ENCODE measurements at regions of chr5 and their contacts with region 1.

Region 1: GRCh38 chr5:91383027-91383955 is at the start of gene ARRDC3:
- DNase-seq: peak; percentile 88
- ATAC-seq: peak; percentile 66
- H3K4me3 ChIP-seq: peak within 1 kb of the TSS; percentile 77 to 78
- H3K27ac ChIP-seq: peak within 1 kb of the TSS; percentile 93
- H3K4me1 ChIP-seq: peaks cover 14 to 25% of the 10 kb centered on the region in 2 experiments
- H3K27me3 ChIP-seq: no peaks in the 10 kb centered on the region
- CTCF ChIP-seq: no peak
- POLR2A ChIP-seq: peak; percentile 99
- RAD21 ChIP-seq: peak; percentile 22
- total RNA-seq, gene ARRDC3: 41.5 TPM

Region 2: GRCh38 chr5:90866333-90866732 is 517.0 kb before region 1 on chr5:
- CTCF ChIA-PET with region 1: interaction called, 21 read pairs
- POLR2A ChIA-PET with region 1: interaction called, 6 read pairs
- RAD21 ChIA-PET with region 1: interaction called, 3 to 4 read pairs
- intact Hi-C with region 1: loop called (anchors 10 kb)
- DNase-seq: peak; percentile 27
- ATAC-seq: peak; percentile 80
- H3K4me3 ChIP-seq: no peak overlapping the region
- H3K27ac ChIP-seq: no peak overlapping the region
- H3K4me1 ChIP-seq: no peaks in the 10 kb centered on the region
- H3K27me3 ChIP-seq: no peaks in the 10 kb centered on the region
- CTCF ChIP-seq: peak; percentile 29 to 66 (median 65); a peak in 4 of 6 replicates
- POLR2A ChIP-seq: no peak
- RAD21 ChIP-seq: peak; percentile 83

Region 3: GRCh38 chr5:91090995-91091394 is 292.3 kb before region 1 on chr5:
- CTCF ChIA-PET with region 1: no interaction called
- POLR2A ChIA-PET with region 1: no interaction called
- RAD21 ChIA-PET with region 1: no interaction called
- intact Hi-C with region 1: no loop called
- DNase-seq: no peak
- ATAC-seq: no peak
- H3K4me3 ChIP-seq: no peak overlapping the region
- H3K27ac ChIP-seq: no peak overlapping the region
- H3K4me1 ChIP-seq: no peaks in the 10 kb centered on the region
- H3K27me3 ChIP-seq: no peaks in the 10 kb centered on the region
- CTCF ChIP-seq: no peak
- POLR2A ChIP-seq: no peak
- RAD21 ChIP-seq: no peak

Region 4: DNA sequence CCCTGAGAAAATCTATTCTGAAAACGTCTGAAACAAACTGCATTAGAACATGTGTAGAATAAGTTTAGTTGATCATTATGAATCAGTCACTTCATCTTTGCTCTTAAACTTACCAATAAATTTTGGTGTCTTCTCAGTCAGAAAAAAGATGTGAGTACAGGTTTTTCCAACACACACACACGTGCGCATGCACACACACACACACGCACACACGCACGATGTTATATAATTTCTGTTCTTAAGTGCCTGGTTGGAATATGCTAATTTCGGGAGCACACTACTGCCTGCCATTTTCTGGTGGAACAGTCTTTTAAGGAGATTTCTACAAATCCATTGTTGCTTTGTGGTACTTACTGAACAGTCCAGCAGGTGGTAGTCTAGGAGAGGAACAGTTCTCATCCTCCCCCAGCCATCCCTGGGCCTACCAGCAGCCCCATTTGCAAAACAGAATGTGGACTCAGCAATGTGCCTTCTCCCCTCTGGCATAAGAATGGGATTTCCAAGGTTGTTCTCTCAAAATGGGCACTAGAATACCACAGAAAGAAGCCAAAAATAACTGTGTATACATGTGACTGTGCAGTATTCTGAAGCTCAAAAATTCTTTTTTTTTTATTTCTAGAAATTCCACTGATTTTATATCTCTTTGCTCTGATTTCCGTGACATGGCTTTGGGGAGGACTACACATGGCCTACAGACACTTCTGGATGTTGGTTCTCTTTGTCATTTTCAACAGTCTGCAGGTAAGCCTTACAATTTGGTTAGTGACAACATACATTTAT is 281.5 kb before region 1 on chr5:
- CTCF ChIA-PET with region 1: interaction called, 6 read pairs
- POLR2A ChIA-PET with region 1: interaction called, 3 read pairs
- RAD21 ChIA-PET with region 1: no interaction called
- intact Hi-C with region 1: loop called (anchors 1 kb)
- DNase-seq: peak; percentile 76
- ATAC-seq: peak; percentile 100
- H3K4me3 ChIP-seq: no peak overlapping the region
- H3K27ac ChIP-seq: no peak overlapping the region
- H3K4me1 ChIP-seq: peaks cover 0 to 4% of the 10 kb centered on the region in 2 experiments; a peak in 1 of 4 replicates
- H3K27me3 ChIP-seq: no peaks in the 10 kb centered on the region
- CTCF ChIP-seq: peak; percentile 71 to 95 (median 84)
- POLR2A ChIP-seq: no peak
- RAD21 ChIP-seq: peak; percentile 97

Region 5: GRCh38 chr5:91225848-91226686 is 157.2 kb before region 1 on chr5:
- CTCF ChIA-PET with region 1: interaction called, 111 read pairs
- POLR2A ChIA-PET with region 1: interaction called, 16 read pairs
- RAD21 ChIA-PET with region 1: interaction called, 9 to 15 read pairs
- intact Hi-C with region 1: loop called (anchors 1 kb)
- DNase-seq: peak; percentile 59
- ATAC-seq: peak; percentile 96
- H3K4me3 ChIP-seq: no peak overlapping the region
- H3K27ac ChIP-seq: no peak overlapping the region
- H3K4me1 ChIP-seq: 0 out of 4 replicates have a peak, but pooled peaks cover 0 to 5% of the 10 kb centered on the region in 2 experiments
- H3K27me3 ChIP-seq: no peaks in the 10 kb centered on the region
- CTCF ChIP-seq: peak; percentile 58 to 98 (median 74)
- POLR2A ChIP-seq: no peak
- RAD21 ChIP-seq: peak; percentile 98

Region 6: DNA sequence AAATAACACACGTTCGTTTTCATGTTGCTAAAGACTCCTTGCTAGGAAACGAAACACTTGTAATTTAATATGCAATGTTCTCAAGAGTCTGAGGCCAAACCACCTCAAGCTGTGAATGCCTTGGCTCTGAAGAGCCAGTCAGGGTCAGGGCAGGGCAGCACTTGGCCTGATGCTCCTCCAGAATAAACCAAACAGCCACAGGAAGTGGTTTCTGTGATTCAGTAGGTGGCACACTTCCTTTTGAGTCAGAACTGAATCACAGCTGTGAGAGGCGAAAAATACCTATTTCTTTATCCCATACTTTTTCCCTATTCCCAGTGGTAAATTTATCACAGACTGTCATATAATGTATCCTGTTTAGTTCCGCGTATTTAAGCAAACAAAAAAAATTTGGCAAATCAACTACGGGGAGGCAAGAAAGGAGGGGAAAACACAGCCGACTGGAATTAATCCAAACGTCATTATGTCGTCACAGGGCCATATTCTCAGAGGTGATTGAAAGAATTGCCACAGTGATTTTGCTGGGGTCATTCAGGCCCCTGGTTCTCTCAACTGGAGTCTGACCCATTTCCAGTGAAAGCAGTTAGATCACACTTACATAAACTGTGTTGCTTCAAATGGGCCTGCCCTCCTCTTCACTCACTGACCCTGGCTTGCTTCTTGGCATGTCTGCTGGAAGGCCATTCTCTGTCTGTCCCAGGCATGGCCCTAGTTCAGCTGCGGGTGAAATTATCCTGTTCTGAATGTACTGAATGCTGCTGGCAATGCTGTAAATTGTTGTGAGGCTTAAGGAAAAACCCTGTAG is 71.4 kb before region 1 on chr5:
- CTCF ChIA-PET with region 1: interaction called, 6 read pairs
- POLR2A ChIA-PET with region 1: interaction called, 23 read pairs
- RAD21 ChIA-PET with region 1: interaction called in 1 of 2 experiments, 4 read pairs
- intact Hi-C with region 1: loop called (anchors 2 kb)
- DNase-seq: peak; percentile 91
- ATAC-seq: peak; percentile 76
- H3K4me3 ChIP-seq: peak overlapping the region; percentile 0 to 32; a peak in 3 of 4 replicates
- H3K27ac ChIP-seq: peak overlapping the region; percentile 59
- H3K4me1 ChIP-seq: peaks cover 34 to 63% of the 10 kb centered on the region in 2 experiments
- H3K27me3 ChIP-seq: no peaks in the 10 kb centered on the region
- CTCF ChIP-seq: no peak
- POLR2A ChIP-seq: no peak
- RAD21 ChIP-seq: no peak

Region 7: GRCh38 chr5:91419571-91420537 is 36.6 kb after region 1 on chr5:
- CTCF ChIA-PET with region 1: interaction called, 67 read pairs
- POLR2A ChIA-PET with region 1: interaction called, 5 read pairs
- RAD21 ChIA-PET with region 1: interaction called in 1 of 2 experiments, 5 read pairs
- intact Hi-C with region 1: no loop called
- DNase-seq: peak; percentile 48
- ATAC-seq: peak; percentile 47; the same call in 1 of the 2 replicates
- H3K4me3 ChIP-seq: no peak overlapping the region
- H3K27ac ChIP-seq: no peak overlapping the region
- H3K4me1 ChIP-seq: no peaks in the 10 kb centered on the region; a peak in 1 of 4 replicates
- H3K27me3 ChIP-seq: no peaks in the 10 kb centered on the region
- CTCF ChIP-seq: peak; percentile 36 to 72 (median 63); a peak in 4 of 6 replicates
- POLR2A ChIP-seq: no peak
- RAD21 ChIP-seq: peak; percentile 85

Measured in HCT116 (cell line).